Activated CD4-positive, alpha-beta T cell treated with anti-CD3 and anti-CD28 coated beads for 36 hours (primary cell): ENCODE measurements at regions of chr17 and their contacts with region 1.

Region 1: GRCh38 chr17:1628856-1629646 is 417 bp upstream of the SLC43A2 start:
- DNase-seq: peak; percentile 93
- ATAC-seq: peak; percentile 80
- H3K4me3 Mint-ChIP-seq: peak overlapping the region; percentile 76
- H3K27ac Mint-ChIP-seq: peak overlapping the region; percentile 56
- H3K4me1 Mint-ChIP-seq: peaks cover 7% of the 10 kb centered on the region
- H3K27me3 Mint-ChIP-seq: peaks cover 12% of the 10 kb centered on the region

Region 2: GRCh38 chr17:1260086-1260769 is 368.8 kb before region 1 on chr17:
- CTCF ChIA-PET with region 1: no interaction called
- POLR2A ChIA-PET with region 1: no interaction called
- intact Hi-C with region 1: loop called in 1 of 2 experiments (anchors 1 kb)
- DNase-seq: no peak
- ATAC-seq: no peak
- H3K4me3 Mint-ChIP-seq: no peak overlapping the region
- H3K27ac Mint-ChIP-seq: no peak overlapping the region
- H3K4me1 Mint-ChIP-seq: peaks cover 11% of the 10 kb centered on the region
- H3K27me3 Mint-ChIP-seq: peaks cover 24% of the 10 kb centered on the region

Region 3: GRCh38 chr17:1365445-1366039 is 263.5 kb before region 1 on chr17:
- CTCF ChIA-PET with region 1: interaction called, 8 read pairs
- POLR2A ChIA-PET with region 1: no interaction called
- intact Hi-C with region 1: loop called in 1 of 2 experiments (anchors 1 kb)
- DNase-seq: peak; percentile 74
- ATAC-seq: peak; percentile 65
- H3K4me3 Mint-ChIP-seq: peak overlapping the region; percentile 21
- H3K27ac Mint-ChIP-seq: no peak overlapping the region
- H3K4me1 Mint-ChIP-seq: peaks cover 71% of the 10 kb centered on the region
- H3K27me3 Mint-ChIP-seq: no peaks in the 10 kb centered on the region

Region 4: GRCh38 chr17:1462287-1463112 is 166.6 kb before region 1 on chr17:
- CTCF ChIA-PET with region 1: interaction called, 4 read pairs
- POLR2A ChIA-PET with region 1: no interaction called
- intact Hi-C with region 1: loop called in 1 of 2 experiments (anchors 2 kb)
- DNase-seq: peak; percentile 32
- ATAC-seq: no peak
- H3K4me3 Mint-ChIP-seq: peak overlapping the region; percentile 37
- H3K27ac Mint-ChIP-seq: no peak overlapping the region
- H3K4me1 Mint-ChIP-seq: peaks cover 38% of the 10 kb centered on the region
- H3K27me3 Mint-ChIP-seq: peaks cover 16% of the 10 kb centered on the region

Region 5: DNA sequence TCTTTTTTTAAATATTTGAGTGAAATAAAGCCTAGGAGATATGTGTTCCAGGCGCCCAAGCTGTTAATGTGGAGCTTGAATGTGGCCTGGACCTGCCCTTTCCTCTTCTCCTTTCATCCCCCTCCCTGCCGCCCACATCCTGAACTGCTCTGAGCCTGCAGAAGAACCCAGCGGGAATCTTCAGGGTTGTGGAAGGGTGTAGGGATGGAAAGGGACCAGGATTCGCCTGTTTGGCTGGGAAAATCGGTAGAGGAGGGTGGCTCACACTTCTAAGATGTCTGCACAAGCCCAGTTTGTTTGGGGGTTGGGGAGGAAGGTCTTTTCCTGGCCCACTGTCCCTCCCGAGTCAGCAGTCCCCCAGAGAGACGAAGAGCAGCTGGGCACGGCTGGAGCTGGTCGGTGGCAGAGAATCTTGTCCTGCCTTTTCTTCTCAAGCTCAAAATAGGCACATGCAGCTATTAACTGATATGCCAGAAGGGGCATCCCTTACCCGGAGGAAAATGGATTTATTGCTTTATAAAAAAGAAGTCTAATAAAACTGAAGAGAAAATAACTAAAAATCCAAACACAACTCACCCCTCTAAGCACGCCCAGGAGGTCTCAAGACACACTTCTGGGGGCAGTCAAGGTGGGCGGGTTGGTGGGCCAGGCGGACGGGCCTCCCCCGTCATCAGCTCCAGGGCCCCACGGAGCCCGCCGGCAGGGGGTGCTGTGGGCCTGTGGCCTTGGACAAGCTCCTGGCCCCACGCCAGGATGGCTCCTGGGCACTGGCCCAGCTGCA is 54.9 kb before region 1 on chr17:
- CTCF ChIA-PET with region 1: interaction called, 36 read pairs
- POLR2A ChIA-PET with region 1: interaction called, 3 read pairs
- intact Hi-C with region 1: loop called (anchors 1 kb)
- DNase-seq: peak; percentile 86
- ATAC-seq: peak; percentile 71
- H3K4me3 Mint-ChIP-seq: no peak overlapping the region
- H3K27ac Mint-ChIP-seq: no peak overlapping the region
- H3K4me1 Mint-ChIP-seq: peaks cover 3% of the 10 kb centered on the region
- H3K27me3 Mint-ChIP-seq: no peaks in the 10 kb centered on the region

Region 6: DNA sequence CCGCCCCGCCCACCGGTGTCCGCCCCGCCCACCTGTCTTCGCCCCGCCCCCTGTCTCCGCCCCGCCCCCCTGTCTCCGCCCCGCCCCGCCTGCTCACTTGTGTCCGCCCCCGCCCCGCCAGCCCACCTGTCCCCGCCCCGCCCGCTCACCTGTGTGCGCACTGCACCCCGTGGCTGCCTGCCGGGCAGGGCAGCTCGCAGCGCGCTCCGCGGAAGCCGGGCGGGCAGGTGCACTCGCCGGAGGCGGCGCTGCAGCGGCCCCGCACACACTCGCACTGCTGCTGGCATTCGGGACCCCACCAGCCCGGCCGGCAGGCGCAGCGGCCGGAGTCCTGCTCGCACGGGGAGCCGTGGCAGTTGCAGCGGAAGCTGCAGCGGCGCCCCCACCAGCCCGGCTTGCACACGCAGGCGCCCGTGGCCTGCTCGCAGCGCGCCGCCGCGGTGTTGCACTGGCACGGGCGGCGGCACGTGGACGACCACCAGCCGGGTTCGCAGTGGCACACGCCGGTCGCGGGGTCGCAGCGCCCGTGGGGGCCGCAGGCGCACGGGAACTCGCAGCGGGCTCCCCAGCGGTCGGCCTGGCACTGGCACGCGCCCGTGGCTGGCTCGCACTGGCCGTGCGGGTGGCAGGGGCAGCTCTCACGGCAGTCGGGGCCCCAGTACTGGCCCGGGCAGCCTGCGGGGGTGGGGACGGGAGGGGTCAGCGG is 14.4 kb after region 1 on chr17:
- CTCF ChIA-PET with region 1: interaction called, 14 read pairs
- POLR2A ChIA-PET with region 1: no interaction called
- intact Hi-C with region 1: loop called in 1 of 2 experiments (anchors 1 kb)
- DNase-seq: peak; percentile 78
- ATAC-seq: peak; percentile 20
- H3K4me3 Mint-ChIP-seq: no peak overlapping the region
- H3K27ac Mint-ChIP-seq: no peak overlapping the region
- H3K4me1 Mint-ChIP-seq: peaks cover 19% of the 10 kb centered on the region
- H3K27me3 Mint-ChIP-seq: no peaks in the 10 kb centered on the region